ENCODE measurements at regions of chr21 and their contacts with region 1.

Region 1: GRCh38 chr21:15064576-15065391 is at the start of gene NRIP1:
- DNase-seq: peak; percentile 92
- H3K4me3 ChIP-seq: peak within 1 kb of the TSS; percentile 80 to 96 (median 92)
- H3K27ac ChIP-seq: peak within 1 kb of the TSS; percentile 95
- H3K4me1 ChIP-seq: peaks cover 30% of the 10 kb centered on the region
- H3K27me3 ChIP-seq: peaks cover 0 to 3% of the 10 kb centered on the region in 2 experiments
- CTCF ChIP-seq: no peak
- POLR2A ChIP-seq: peak; percentile 66
- total RNA-seq, gene NRIP1: 24.0 and 26.6 TPM in 2 replicates

Region 2: DNA sequence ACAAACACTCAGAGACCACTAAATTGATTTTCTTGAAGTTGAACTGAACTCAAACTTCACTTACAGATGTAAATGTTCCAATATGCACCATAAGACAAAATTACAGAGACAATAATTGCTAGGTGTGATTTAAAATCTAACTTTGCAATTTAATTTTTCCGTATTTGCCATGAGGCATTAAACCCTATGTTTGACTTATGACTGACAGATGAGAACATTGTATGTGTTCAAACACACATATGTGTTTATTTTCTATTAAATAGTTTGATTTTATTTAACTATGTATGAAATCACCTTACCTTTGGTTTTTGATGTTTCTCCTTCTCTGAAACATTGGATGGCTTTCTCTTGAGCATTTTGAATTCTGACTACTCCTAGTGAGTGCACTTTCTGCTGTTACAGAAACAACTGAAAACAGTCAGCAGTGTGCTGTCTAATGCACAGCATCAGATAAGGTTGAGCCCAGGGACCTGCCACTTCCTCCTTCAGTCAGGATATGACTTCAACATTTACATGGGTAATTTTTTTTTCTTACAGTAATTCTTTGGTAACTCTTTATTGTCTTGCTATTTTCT is 518.8 kb before region 1 on chr21 and contains the start of gene SAMSN1:
- CTCF ChIA-PET with region 1: no interaction called
- POLR2A ChIA-PET with region 1: no interaction called
- dilution Hi-C with region 1: no loop called
- intact Hi-C with region 1: loop called (anchors 2 kb)
- DNase-seq: peak; percentile 85
- H3K4me3 ChIP-seq: peak within 1 kb of the TSS; percentile 12 to 91 (median 49)
- H3K27ac ChIP-seq: peak within 1 kb of the TSS; percentile 79
- H3K4me1 ChIP-seq: peaks cover 45% of the 10 kb centered on the region
- H3K27me3 ChIP-seq: no peaks in the 10 kb centered on the region
- CTCF ChIP-seq: no peak
- POLR2A ChIP-seq: peak; percentile 69
- total RNA-seq, gene SAMSN1: 5.3 and 8.0 TPM in 2 replicates

Region 3: DNA sequence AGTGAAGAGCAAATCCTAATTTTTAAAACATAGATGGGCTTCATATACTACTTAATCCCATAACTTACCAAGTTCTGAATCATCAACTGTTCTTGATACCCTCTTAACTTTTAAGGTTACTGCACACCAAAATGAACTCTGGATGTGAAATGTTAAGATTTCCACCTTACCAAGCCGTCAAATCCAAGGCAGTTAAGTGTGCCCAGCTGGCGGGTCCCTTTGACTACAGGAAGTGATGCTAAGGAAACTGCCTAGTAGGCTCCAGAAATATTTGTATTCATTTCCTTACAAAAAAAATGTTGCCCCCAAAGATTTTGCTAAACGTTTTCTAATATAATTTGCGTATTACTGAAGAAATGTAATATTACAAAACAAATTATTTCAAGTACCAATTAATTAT is 10.7 kb before region 1 on chr21:
- CTCF ChIA-PET with region 1: interaction called, 7 read pairs
- POLR2A ChIA-PET with region 1: interaction called, 3 read pairs
- dilution Hi-C with region 1: no loop called
- intact Hi-C with region 1: loop called (anchors 1 kb)
- DNase-seq: peak; percentile 25
- H3K4me3 ChIP-seq: no peak overlapping the region
- H3K27ac ChIP-seq: no peak overlapping the region
- H3K4me1 ChIP-seq: peaks cover 28% of the 10 kb centered on the region
- H3K27me3 ChIP-seq: no peaks in the 10 kb centered on the region
- CTCF ChIP-seq: no peak
- POLR2A ChIP-seq: no peak

Region 4: DNA sequence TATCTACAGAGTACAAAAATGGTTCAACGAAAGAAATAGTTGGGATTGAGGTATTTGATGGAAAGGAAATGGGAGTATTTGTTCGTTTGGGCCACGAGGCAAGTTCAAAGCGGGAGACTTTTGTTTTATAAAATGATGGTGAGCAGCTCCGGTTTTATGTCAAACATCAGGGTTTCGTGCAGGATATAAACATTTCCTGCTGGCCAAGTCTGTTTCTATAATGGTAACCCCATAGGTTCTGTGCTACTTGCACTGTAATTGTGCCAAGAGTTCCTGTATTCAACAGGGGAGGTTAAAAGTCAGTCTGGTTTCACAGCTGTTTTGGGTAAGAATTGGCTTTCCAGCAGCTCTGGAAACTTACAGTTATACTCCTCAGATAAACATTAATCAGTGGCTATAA is 290.3 kb after region 1 on chr21:
- CTCF ChIA-PET with region 1: no interaction called
- POLR2A ChIA-PET with region 1: no interaction called
- dilution Hi-C with region 1: no loop called
- intact Hi-C with region 1: loop called (anchors 2 kb)
- DNase-seq: peak; percentile 93
- H3K4me3 ChIP-seq: no peak overlapping the region
- H3K27ac ChIP-seq: peak overlapping the region; percentile 17
- H3K4me1 ChIP-seq: peaks cover 32% of the 10 kb centered on the region
- H3K27me3 ChIP-seq: no peaks in the 10 kb centered on the region
- CTCF ChIP-seq: no peak
- POLR2A ChIP-seq: no peak

Region 5: GRCh38 chr21:15729674-15730483 is 665.1 kb after region 1 on chr21 and contains the start of gene USP25:
- CTCF ChIA-PET with region 1: no interaction called
- POLR2A ChIA-PET with region 1: no interaction called
- dilution Hi-C with region 1: no loop called
- intact Hi-C with region 1: loop called (anchors 5 kb)
- DNase-seq: peak; percentile 75
- H3K4me3 ChIP-seq: peak within 1 kb of the TSS; percentile 92 to 99 (median 95)
- H3K27ac ChIP-seq: peak within 1 kb of the TSS; percentile 82
- H3K4me1 ChIP-seq: peaks cover 19% of the 10 kb centered on the region
- H3K27me3 ChIP-seq: no peaks in the 10 kb centered on the region
- CTCF ChIP-seq: no peak
- POLR2A ChIP-seq: peak; percentile 82
- total RNA-seq, gene USP25: 66.9 and 67.5 TPM in 2 replicates

Measured in endothelial cell of umbilical vein (primary cell).